Activated T-helper 2 cell treated with anti-CD3 and anti-CD28 coated beads, Interferon-gamma antibody, Interleukin-2, Interleukin-4, amounts not matched to agents 10 μg/mL and 5 μg/mL and 100 μg/mL, durations not matched to agents 14 hours and 24 hours and 36 hours (primary cell): ENCODE measurements at regions of chr1 and their contacts with region 1.

Region 1: DNA sequence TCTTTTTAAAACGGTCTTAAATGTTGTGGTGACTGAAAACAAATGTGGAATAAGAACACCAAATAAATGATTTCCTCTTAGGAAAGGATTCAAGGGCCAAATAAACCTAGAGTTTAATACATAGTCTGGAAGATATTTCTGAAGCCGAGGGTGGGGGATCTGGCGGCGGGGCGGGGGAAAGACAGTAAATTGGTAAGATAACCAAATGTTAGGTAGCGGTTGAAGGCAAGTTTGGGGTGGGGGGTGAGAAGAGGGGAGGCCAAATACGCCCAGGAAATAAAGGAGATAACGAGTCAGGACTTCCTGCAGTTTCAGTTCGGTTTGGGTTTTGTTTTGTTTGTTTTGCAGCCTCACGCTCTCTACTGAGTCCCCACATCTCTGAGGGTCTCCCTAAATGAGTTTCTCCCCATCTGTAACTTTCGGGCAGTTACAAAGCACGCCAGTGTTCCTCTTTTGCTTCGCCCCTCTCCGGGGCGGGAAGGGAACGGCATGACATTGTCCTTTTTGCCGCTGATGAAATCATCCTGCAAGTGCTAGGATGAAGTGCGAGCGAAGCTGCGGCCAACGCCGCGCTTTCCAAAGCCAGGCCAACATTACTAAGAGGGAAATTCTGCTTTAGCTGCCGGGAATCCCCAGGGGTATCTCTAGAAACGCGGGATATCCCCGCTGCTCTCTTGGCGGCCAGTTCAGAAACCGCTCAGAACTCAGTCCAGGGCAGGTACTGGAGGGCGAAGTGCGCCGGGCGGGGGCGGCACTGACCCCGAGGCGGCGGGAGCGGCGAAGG is 844 bp downstream of the NIBAN1 start:
- DNase-seq: no peak
- H3K4me3 Mint-ChIP-seq: peak overlapping the region; percentile 90
- H3K27ac Mint-ChIP-seq: peak overlapping the region; percentile 96
- H3K4me1 Mint-ChIP-seq: peaks cover 57% of the 10 kb centered on the region
- H3K27me3 Mint-ChIP-seq: peaks cover 13% of the 10 kb centered on the region

Region 2: GRCh38 chr1:184866991-184867788 is 106.3 kb before region 1 on chr1:
- intact Hi-C with region 1: loop called (anchors 1 kb)
- DNase-seq: peak; percentile 53
- H3K4me3 Mint-ChIP-seq: peak overlapping the region; percentile 60
- H3K27ac Mint-ChIP-seq: peak overlapping the region; percentile 93
- H3K4me1 Mint-ChIP-seq: peaks cover 40% of the 10 kb centered on the region
- H3K27me3 Mint-ChIP-seq: peaks cover 4% of the 10 kb centered on the region

Region 3: GRCh38 chr1:184892116-184892515 is 81.3 kb before region 1 on chr1:
- intact Hi-C with region 1: loop called (anchors 1 kb)
- DNase-seq: no peak
- H3K4me3 Mint-ChIP-seq: no peak overlapping the region
- H3K27ac Mint-ChIP-seq: peak overlapping the region; percentile 85
- H3K4me1 Mint-ChIP-seq: peaks cover 41% of the 10 kb centered on the region
- H3K27me3 Mint-ChIP-seq: no peaks in the 10 kb centered on the region

Region 4: GRCh38 chr1:184954231-184954995 is 19.1 kb before region 1 on chr1:
- intact Hi-C with region 1: loop called (anchors 2 kb)
- DNase-seq: no peak
- H3K4me3 Mint-ChIP-seq: peak overlapping the region; percentile 27
- H3K27ac Mint-ChIP-seq: peak overlapping the region; percentile 67
- H3K4me1 Mint-ChIP-seq: peaks cover 17% of the 10 kb centered on the region
- H3K27me3 Mint-ChIP-seq: no peaks in the 10 kb centered on the region

Region 5: GRCh38 chr1:185526344-185527307 is 553.2 kb after region 1 on chr1:
- intact Hi-C with region 1: no loop called
- DNase-seq: no peak
- H3K4me3 Mint-ChIP-seq: no peak overlapping the region
- H3K27ac Mint-ChIP-seq: no peak overlapping the region
- H3K4me1 Mint-ChIP-seq: peaks cover 2% of the 10 kb centered on the region
- H3K27me3 Mint-ChIP-seq: no peaks in the 10 kb centered on the region